ENCODE measurements at regions of chr1 and their contacts with region 1.

Region 1: DNA sequence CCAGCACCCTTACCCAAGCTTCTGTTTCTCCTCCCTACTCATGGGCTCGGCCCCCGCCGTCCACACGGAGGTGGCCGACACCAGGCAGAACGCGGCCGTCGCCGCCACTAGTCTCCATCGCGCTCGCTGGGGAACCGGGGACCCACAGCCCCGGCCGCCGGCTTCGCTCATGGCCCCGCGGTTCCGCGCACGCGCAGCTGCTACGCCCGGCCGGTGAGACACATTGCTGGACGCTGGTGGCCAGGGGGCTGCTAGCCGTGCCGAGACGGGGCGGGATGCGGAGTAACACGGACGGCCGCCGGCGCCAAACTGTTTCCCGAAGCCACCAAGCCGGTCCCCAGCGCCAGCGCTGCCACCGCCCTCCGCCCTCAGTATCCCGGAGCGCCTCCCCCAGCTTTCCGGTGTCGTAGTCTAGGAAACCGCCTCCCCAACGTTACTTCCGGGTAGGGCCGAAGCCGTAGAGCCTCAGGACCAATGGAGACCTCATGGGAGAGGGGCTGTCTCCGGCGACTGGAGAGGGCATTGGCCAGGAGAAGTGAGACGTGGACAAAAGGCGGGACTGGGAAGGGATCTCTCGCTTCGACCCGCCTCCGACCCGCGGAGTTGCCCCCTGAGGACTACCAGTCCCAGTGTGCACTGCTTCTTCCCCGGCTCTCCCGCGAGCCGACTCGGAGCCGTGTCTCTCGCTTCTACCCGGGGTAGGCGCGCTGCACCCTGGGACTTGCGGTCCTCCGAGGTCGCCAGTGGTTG is at the start of gene EDEM3:
- DNase-seq: peak; percentile 86 to 100 (median 99)
- ATAC-seq: peak; percentile 96
- H3K4me3 ChIP-seq: peak within 1 kb of the TSS; percentile 84
- H3K4me3 Mint-ChIP-seq: peak within 1 kb of the TSS; percentile 87 to 96 (median 94)
- H3K27ac ChIP-seq: peak within 1 kb of the TSS; percentile 91
- H3K27ac Mint-ChIP-seq: peak within 1 kb of the TSS; percentile 71 to 97 (median 93)
- H3K4me1 ChIP-seq: peaks cover 9 to 13% of the 10 kb centered on the region in 2 donors
- H3K4me1 Mint-ChIP-seq: peaks cover 21 to 50% (median 46%) of the 10 kb centered on the region in 7 donors
- H3K27me3 ChIP-seq: no peaks in the 10 kb centered on the region
- H3K27me3 Mint-ChIP-seq: peaks cover 0 to 13% (median 0%) of the 10 kb centered on the region in 5 donors
- total RNA-seq, gene EDEM3: 21.0 to 55.9 (median 33.9) TPM

Region 2: GRCh38 chr1:182789138-182790076 is 1965.2 kb before region 1 on chr1 and contains the start of gene NPL:
- CTCF ChIA-PET with region 1: no interaction called
- POLR2A ChIA-PET with region 1: no interaction called
- intact Hi-C with region 1: loop called in 1 of 2 experiments (anchors 2 kb)
- DNase-seq: peak; percentile 78 to 88 (median 86)
- ATAC-seq: peak; percentile 97
- H3K4me3 ChIP-seq: peak within 1 kb of the TSS; percentile 94
- H3K4me3 Mint-ChIP-seq: peak within 1 kb of the TSS; percentile 88 to 96 (median 94)
- H3K27ac ChIP-seq: peak within 1 kb of the TSS; percentile 68
- H3K27ac Mint-ChIP-seq: peak within 1 kb of the TSS; percentile 45 to 94 (median 87)
- H3K4me1 ChIP-seq: peaks cover 8 to 13% of the 10 kb centered on the region in 2 donors
- H3K4me1 Mint-ChIP-seq: peaks cover 8 to 18% (median 15%) of the 10 kb centered on the region in 7 donors
- H3K27me3 ChIP-seq: no peaks in the 10 kb centered on the region
- H3K27me3 Mint-ChIP-seq: peaks cover 0 to 38% (median 0%) of the 10 kb centered on the region in 5 donors
- total RNA-seq, gene NPL: 3.0 to 20.8 (median 9.9) TPM

Region 3: GRCh38 chr1:184051485-184052193 is 703.0 kb before region 1 on chr1 and contains the start of gene TSEN15:
- CTCF ChIA-PET with region 1: no interaction called
- POLR2A ChIA-PET with region 1: no interaction called
- intact Hi-C with region 1: loop called (anchors 2 to 5 kb)
- DNase-seq: peak; percentile 54 to 75 (median 68)
- ATAC-seq: peak; percentile 98
- H3K4me3 ChIP-seq: peak within 1 kb of the TSS; percentile 87
- H3K4me3 Mint-ChIP-seq: peak within 1 kb of the TSS; percentile 91 to 99 (median 98)
- H3K27ac ChIP-seq: peak within 1 kb of the TSS; percentile 77
- H3K27ac Mint-ChIP-seq: peak within 1 kb of the TSS; percentile 89 to 99 (median 95)
- H3K4me1 ChIP-seq: peaks cover 19 to 23% of the 10 kb centered on the region in 2 donors
- H3K4me1 Mint-ChIP-seq: peaks cover 18 to 56% (median 45%) of the 10 kb centered on the region in 7 donors
- H3K27me3 ChIP-seq: peaks cover 0 to 3% of the 10 kb centered on the region in 2 donors
- H3K27me3 Mint-ChIP-seq: peaks cover 13 to 33% (median 20%) of the 10 kb centered on the region in 5 donors
- total RNA-seq, gene TSEN15: 12.7 to 48.9 (median 31.1) TPM

Region 4: DNA sequence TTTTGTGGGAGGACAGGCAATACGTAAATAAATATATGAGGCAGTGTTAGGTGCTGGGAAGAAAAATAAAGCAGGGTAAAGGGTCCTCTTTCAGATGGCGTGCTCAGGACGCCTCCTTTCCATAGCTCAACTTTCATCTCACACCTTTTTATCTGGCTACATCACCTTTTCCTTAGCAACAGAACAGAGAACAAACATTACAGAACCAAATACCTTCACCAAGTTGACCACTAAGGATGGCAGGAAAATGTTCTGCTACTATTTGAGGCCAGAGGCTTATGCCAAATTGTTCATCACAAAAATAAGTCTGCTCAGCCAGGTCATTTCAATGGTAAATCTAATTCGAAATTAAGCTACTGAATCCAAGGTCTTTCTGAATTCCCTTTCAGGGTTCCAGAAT is 517.1 kb before region 1 on chr1:
- CTCF ChIA-PET with region 1: no interaction called
- POLR2A ChIA-PET with region 1: no interaction called
- intact Hi-C with region 1: no loop called
- DNase-seq: no peak
- ATAC-seq: no peak
- H3K4me3 ChIP-seq: no peak overlapping the region
- H3K4me3 Mint-ChIP-seq: no peak overlapping the region
- H3K27ac ChIP-seq: no peak overlapping the region
- H3K27ac Mint-ChIP-seq: no peak overlapping the region
- H3K4me1 ChIP-seq: no peaks in the 10 kb centered on the region
- H3K4me1 Mint-ChIP-seq: no peaks in the 10 kb centered on the region
- H3K27me3 ChIP-seq: no peaks in the 10 kb centered on the region
- H3K27me3 Mint-ChIP-seq: peaks cover 5 to 32% (median 22%) of the 10 kb centered on the region in 5 donors

Region 5: DNA sequence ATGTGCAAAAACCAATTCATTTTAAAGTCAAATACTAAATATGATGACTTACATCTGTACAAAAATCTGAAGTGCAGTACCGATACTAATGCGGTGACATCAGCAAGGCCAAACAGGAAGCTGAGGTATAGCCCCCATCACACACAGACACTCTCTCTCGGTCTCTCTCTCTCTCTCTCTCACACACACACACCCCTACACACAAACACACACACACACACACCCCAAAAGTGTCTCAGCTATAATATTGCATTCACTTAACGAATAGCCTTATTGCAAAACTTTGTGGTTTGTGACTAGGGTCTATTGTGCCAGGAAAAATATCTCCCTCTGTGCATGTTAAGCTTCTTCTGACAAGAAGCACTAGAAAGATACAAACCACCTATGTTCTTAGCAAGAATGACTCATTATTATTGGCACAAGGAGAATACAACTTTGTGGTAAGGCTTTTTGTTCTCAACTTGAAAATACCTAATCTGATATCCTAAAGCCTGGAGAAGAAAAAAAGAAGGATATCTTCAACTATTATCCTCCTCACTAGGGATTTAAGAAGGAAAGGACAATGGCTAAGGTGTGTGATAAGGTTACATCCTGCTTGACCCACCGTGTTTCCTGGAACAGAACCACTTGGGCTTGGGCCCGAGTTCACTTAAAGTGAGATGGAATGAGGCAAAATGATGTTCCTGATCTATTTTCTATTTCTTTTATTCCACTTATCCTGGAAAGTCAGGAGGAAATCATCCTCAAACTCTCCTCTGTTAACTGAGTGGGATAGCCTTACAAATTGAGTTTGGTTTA is 112.5 kb after region 1 on chr1:
- CTCF ChIA-PET with region 1: no interaction called
- POLR2A ChIA-PET with region 1: no interaction called
- intact Hi-C with region 1: loop called in 1 of 2 experiments (anchors 5 kb)
- DNase-seq: peak in 6 of 9 donors; percentile 10 to 36 (median 13)
- ATAC-seq: peak; percentile 92
- H3K4me3 ChIP-seq: no peak overlapping the region
- H3K4me3 Mint-ChIP-seq: peak overlapping the region in 6 of 10 donors; percentile 4 to 66 (median 28)
- H3K27ac ChIP-seq: no peak overlapping the region
- H3K27ac Mint-ChIP-seq: peak overlapping the region in 6 of 9 donors; percentile 0 to 81 (median 9)
- H3K4me1 ChIP-seq: peaks cover 0 to 27% of the 10 kb centered on the region in 2 donors
- H3K4me1 Mint-ChIP-seq: peaks cover 11 to 50% (median 14%) of the 10 kb centered on the region in 7 donors
- H3K27me3 ChIP-seq: no peaks in the 10 kb centered on the region
- H3K27me3 Mint-ChIP-seq: peaks cover 0 to 9% (median 5%) of the 10 kb centered on the region in 5 donors

Region 6: GRCh38 chr1:185017326-185017725 is 262.7 kb after region 1 on chr1:
- CTCF ChIA-PET with region 1: no interaction called
- POLR2A ChIA-PET with region 1: no interaction called
- intact Hi-C with region 1: no loop called
- DNase-seq: no peak
- ATAC-seq: peak; percentile 52
- H3K4me3 ChIP-seq: no peak overlapping the region
- H3K4me3 Mint-ChIP-seq: no peak overlapping the region
- H3K27ac ChIP-seq: no peak overlapping the region
- H3K27ac Mint-ChIP-seq: no peak overlapping the region
- H3K4me1 ChIP-seq: no peaks in the 10 kb centered on the region
- H3K4me1 Mint-ChIP-seq: peaks cover 0 to 2% (median 0%) of the 10 kb centered on the region in 7 donors
- H3K27me3 ChIP-seq: no peaks in the 10 kb centered on the region
- H3K27me3 Mint-ChIP-seq: peaks cover 0 to 13% (median 5%) of the 10 kb centered on the region in 5 donors

Region 7: GRCh38 chr1:185559684-185560331 is 805.2 kb after region 1 on chr1:
- CTCF ChIA-PET with region 1: no interaction called
- POLR2A ChIA-PET with region 1: no interaction called
- intact Hi-C with region 1: loop called in 1 of 2 experiments (anchors 2 kb)
- DNase-seq: peak in 8 of 9 donors; percentile 9 to 57 (median 18)
- ATAC-seq: peak; percentile 91
- H3K4me3 ChIP-seq: no peak overlapping the region
- H3K4me3 Mint-ChIP-seq: peak overlapping the region in 8 of 10 donors; percentile 46 to 70 (median 58)
- H3K27ac ChIP-seq: no peak overlapping the region
- H3K27ac Mint-ChIP-seq: peak overlapping the region; percentile 63 to 91 (median 81)
- H3K4me1 ChIP-seq: peaks cover 26 to 35% of the 10 kb centered on the region in 2 donors
- H3K4me1 Mint-ChIP-seq: peaks cover 36 to 53% (median 48%) of the 10 kb centered on the region in 7 donors
- H3K27me3 ChIP-seq: no peaks in the 10 kb centered on the region
- H3K27me3 Mint-ChIP-seq: no peaks in the 10 kb centered on the region

Region 8: DNA sequence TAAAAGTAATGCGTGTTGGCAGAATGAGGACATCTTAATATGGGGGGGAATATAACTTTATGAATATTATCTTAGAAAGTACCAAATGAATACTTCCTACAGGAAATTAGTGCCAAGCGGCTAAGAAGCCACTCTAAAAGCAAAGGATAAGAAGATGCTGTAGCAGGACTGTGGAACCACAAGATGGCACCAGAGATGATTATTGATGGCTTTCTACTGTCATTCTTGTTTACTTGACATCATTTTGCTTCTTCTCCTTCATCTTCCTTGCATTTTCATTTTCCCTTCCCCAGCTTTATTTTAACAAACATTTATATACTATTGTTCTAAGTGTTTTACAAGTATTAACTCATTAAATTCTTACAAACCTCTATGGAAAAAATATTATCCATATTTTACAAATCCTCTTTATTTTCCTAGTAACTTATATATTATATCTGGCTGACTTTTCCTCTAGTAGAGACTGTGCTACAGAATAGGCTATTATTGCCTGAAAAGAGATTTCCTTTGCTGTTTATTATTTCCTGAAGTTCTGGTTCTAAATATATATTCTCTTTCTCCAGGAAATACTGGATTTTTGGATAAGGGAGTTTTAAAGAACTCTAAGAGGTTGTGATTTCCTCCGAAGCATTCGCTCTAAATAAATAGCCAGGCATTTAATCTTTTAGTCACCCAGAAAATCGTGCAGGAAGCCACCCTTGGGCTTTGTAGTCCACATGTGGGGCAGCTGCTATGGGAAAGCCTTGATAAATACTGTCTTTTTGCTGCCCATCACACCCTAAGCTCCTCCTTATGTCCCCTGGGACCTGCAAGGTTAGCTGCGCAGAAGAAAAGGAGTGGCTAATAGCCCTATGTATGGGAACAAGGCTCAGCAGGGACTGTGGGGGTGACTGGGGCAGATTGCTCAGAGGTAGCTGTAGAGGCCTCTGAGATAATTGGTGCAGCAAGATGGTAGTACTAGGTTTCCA is 1550.6 kb after region 1 on chr1:
- CTCF ChIA-PET with region 1: no interaction called
- POLR2A ChIA-PET with region 1: interaction called, 3 read pairs
- intact Hi-C with region 1: loop called (anchors 10 kb)
- DNase-seq: peak in 6 of 9 donors; percentile 34 to 51 (median 42)
- ATAC-seq: peak; percentile 39
- H3K4me3 ChIP-seq: no peak overlapping the region
- H3K4me3 Mint-ChIP-seq: peak overlapping the region in 9 of 10 donors; percentile 2 to 76 (median 45)
- H3K27ac ChIP-seq: peak overlapping the region; percentile 58
- H3K27ac Mint-ChIP-seq: peak overlapping the region; percentile 82 to 95 (median 91)
- H3K4me1 ChIP-seq: peaks cover 3 to 83% of the 10 kb centered on the region in 2 donors
- H3K4me1 Mint-ChIP-seq: peaks cover 35 to 66% (median 56%) of the 10 kb centered on the region in 7 donors
- H3K27me3 ChIP-seq: no peaks in the 10 kb centered on the region
- H3K27me3 Mint-ChIP-seq: no peaks in the 10 kb centered on the region

Measured in naive thymus-derived CD4-positive, alpha-beta T cell (primary cell).